Activated naive CD4-positive, alpha-beta T cell treated with anti-CD3 and anti-CD28 coated beads, Interleukin-2, amount 10 ng/mL, durations not matched to agents 7 days and 5 days (primary cell): ENCODE measurements at regions of chr6 and their contacts with region 1.

Region 1: GRCh38 chr6:159042003-159042825 is 2.6 kb downstream of the TAGAP start:
- DNase-seq: peak; percentile 83
- H3K4me3 Mint-ChIP-seq: peak overlapping the region; percentile 96
- H3K27ac Mint-ChIP-seq: peak overlapping the region; percentile 98
- H3K4me1 Mint-ChIP-seq: peaks cover 66% of the 10 kb centered on the region
- H3K27me3 Mint-ChIP-seq: no peaks in the 10 kb centered on the region

Region 2: GRCh38 chr6:158718461-158719046 is 323.7 kb before region 1 on chr6:
- CTCF ChIA-PET with region 1: no interaction called
- DNase-seq: no peak
- H3K4me3 Mint-ChIP-seq: no peak overlapping the region
- H3K27ac Mint-ChIP-seq: peak overlapping the region; percentile 89
- H3K4me1 Mint-ChIP-seq: peaks cover 76% of the 10 kb centered on the region
- H3K27me3 Mint-ChIP-seq: no peaks in the 10 kb centered on the region

Region 3: GRCh38 chr6:159017757-159018559 is 24.3 kb before region 1 on chr6:
- CTCF ChIA-PET with region 1: interaction called, 10 read pairs
- DNase-seq: no peak
- H3K4me3 Mint-ChIP-seq: no peak overlapping the region
- H3K27ac Mint-ChIP-seq: peak overlapping the region; percentile 16
- H3K4me1 Mint-ChIP-seq: peaks cover 29% of the 10 kb centered on the region
- H3K27me3 Mint-ChIP-seq: peaks cover 5% of the 10 kb centered on the region

Region 4: DNA sequence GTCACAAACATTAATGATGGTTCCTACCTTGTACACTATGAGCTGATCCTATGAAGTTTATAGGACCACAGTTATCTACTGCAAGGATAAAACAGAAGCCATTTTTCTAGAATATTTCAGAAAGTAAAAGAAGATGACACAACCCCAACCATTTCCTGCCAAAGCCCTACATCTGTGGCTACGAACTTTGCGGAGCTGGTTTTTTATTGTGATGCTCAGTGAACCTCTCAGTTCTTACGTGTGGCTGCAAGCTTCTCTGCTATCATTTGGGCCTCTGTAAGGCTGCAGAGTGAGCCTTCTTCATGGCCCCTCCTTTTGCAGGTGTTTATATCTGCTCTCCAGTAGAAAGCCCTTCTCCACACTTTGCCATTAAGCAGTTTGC is 20.3 kb after region 1 on chr6:
- CTCF ChIA-PET with region 1: interaction called, 13 read pairs
- DNase-seq: peak; percentile 80
- H3K4me3 Mint-ChIP-seq: peak overlapping the region; percentile 50
- H3K27ac Mint-ChIP-seq: peak overlapping the region; percentile 100
- H3K4me1 Mint-ChIP-seq: peaks cover 72% of the 10 kb centered on the region
- H3K27me3 Mint-ChIP-seq: peaks cover 8% of the 10 kb centered on the region

Region 5: DNA sequence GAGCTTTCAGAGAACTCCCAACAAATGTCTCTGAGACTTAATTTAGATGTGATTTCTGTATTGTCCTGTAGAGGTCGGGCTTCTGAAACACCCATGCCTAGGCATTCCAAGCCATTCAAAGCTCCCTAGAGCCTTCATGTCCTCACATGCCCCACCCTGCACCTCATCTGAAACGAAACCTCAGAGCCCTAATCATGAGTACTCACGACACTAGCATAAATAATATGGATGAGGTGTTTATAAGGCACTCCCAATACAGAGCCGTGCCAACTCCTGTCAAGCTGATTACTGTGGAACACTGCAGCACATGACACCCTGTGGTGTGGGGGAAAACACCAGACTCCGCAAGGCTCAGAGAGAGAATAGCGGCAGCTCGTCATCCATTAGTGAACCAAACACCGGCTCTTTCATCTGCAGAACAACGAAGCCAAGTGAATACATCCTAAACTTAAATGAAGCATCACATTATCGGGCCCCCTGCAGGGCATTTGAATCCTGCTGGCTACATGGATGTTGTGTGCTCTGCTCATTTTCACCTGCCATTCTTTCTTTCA is 210.8 kb after region 1 on chr6:
- CTCF ChIA-PET with region 1: no interaction called
- DNase-seq: no peak
- H3K4me3 Mint-ChIP-seq: no peak overlapping the region
- H3K27ac Mint-ChIP-seq: no peak overlapping the region
- H3K4me1 Mint-ChIP-seq: no peaks in the 10 kb centered on the region
- H3K27me3 Mint-ChIP-seq: peaks cover 4% of the 10 kb centered on the region